ENCODE measurements at regions of chr20 and their contacts with region 1.

Region 1: DNA sequence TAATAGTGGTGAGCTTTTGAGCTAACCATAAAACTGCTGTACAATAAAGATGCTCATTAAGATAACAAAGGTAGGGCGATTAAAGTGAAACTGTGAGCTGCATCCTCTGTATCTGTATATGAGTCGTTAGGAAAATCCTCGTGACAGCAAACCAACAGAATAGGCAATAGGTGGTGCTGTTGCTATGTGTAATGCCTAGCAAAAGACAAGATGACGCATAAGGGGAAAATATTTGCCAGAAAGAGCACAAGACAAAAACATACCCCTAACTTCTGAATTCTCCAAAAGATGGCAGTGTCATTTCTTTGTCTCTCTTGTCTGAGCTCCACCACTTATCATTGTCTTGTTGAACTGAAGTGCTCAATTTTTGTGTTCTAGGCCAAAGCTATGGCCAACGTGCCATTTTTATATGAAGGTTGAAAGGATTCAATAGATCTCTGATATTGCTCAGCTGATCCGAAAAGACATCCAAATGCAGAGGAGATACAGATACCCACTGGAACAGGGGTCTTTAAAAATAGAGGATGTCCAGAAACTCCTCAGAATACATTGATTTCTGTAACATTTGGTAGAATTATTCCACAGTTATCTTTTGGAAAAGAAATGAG is 56.3 kb upstream of the ANKEF1 start:
- DNase-seq: peak in 7 of 9 experiments; percentile 5 to 80 (median 26)
- ATAC-seq: peak; percentile 81
- H3K4me3 ChIP-seq: no peak overlapping the region
- H3K4me3 Mint-ChIP-seq: no peak overlapping the region
- H3K27ac ChIP-seq: no peak overlapping the region
- H3K27ac Mint-ChIP-seq: no peak overlapping the region
- H3K4me1 ChIP-seq: no peaks in the 10 kb centered on the region
- H3K4me1 Mint-ChIP-seq: no peaks in the 10 kb centered on the region
- H3K27me3 ChIP-seq: no peaks in the 10 kb centered on the region
- H3K27me3 Mint-ChIP-seq: no peaks in the 10 kb centered on the region
- CTCF ChIP-seq: peak; percentile 72

Region 2: GRCh38 chr20:9359561-9360308 is 618.8 kb before region 1 on chr20:
- CTCF ChIA-PET with region 1: no interaction called
- POLR2A ChIA-PET with region 1: no interaction called
- intact Hi-C with region 1: no loop called
- DNase-seq: no peak
- ATAC-seq: no peak
- H3K4me3 ChIP-seq: no peak overlapping the region
- H3K4me3 Mint-ChIP-seq: no peak overlapping the region
- H3K27ac ChIP-seq: no peak overlapping the region
- H3K27ac Mint-ChIP-seq: no peak overlapping the region
- H3K4me1 ChIP-seq: no peaks in the 10 kb centered on the region
- H3K4me1 Mint-ChIP-seq: no peaks in the 10 kb centered on the region
- H3K27me3 ChIP-seq: no peaks in the 10 kb centered on the region
- H3K27me3 Mint-ChIP-seq: no peaks in the 10 kb centered on the region
- CTCF ChIP-seq: no peak

Region 3: GRCh38 chr20:10090588-10091166 is 112.2 kb after region 1 on chr20:
- CTCF ChIA-PET with region 1: interaction called, 127 read pairs
- POLR2A ChIA-PET with region 1: interaction called, 4 read pairs
- intact Hi-C with region 1: loop called (anchors 1 to 2 kb)
- DNase-seq: peak in 5 of 9 experiments; percentile 5 to 56 (median 24)
- ATAC-seq: peak; percentile 58
- H3K4me3 ChIP-seq: no peak overlapping the region
- H3K4me3 Mint-ChIP-seq: no peak overlapping the region
- H3K27ac ChIP-seq: no peak overlapping the region
- H3K27ac Mint-ChIP-seq: no peak overlapping the region
- H3K4me1 ChIP-seq: no peaks in the 10 kb centered on the region
- H3K4me1 Mint-ChIP-seq: no peaks in the 10 kb centered on the region
- H3K27me3 ChIP-seq: no peaks in the 10 kb centered on the region
- H3K27me3 Mint-ChIP-seq: peaks cover 6% of the 10 kb centered on the region
- CTCF ChIP-seq: peak; percentile 52

Region 4: GRCh38 chr20:10201321-10201870 is 222.9 kb after region 1 on chr20:
- CTCF ChIA-PET with region 1: no interaction called
- POLR2A ChIA-PET with region 1: no interaction called
- intact Hi-C with region 1: no loop called
- DNase-seq: no peak
- ATAC-seq: no peak
- H3K4me3 ChIP-seq: no peak overlapping the region
- H3K4me3 Mint-ChIP-seq: no peak overlapping the region
- H3K27ac ChIP-seq: no peak overlapping the region
- H3K27ac Mint-ChIP-seq: no peak overlapping the region
- H3K4me1 ChIP-seq: no peaks in the 10 kb centered on the region
- H3K4me1 Mint-ChIP-seq: no peaks in the 10 kb centered on the region
- H3K27me3 ChIP-seq: no peaks in the 10 kb centered on the region
- H3K27me3 Mint-ChIP-seq: no peaks in the 10 kb centered on the region
- CTCF ChIP-seq: no peak

Region 5: GRCh38 chr20:10357974-10358373 is 379.5 kb after region 1 on chr20:
- CTCF ChIA-PET with region 1: no interaction called
- POLR2A ChIA-PET with region 1: no interaction called
- intact Hi-C with region 1: loop called in 1 of 2 experiments (anchors 1 kb)
- DNase-seq: peak in 2 of 9 experiments; percentile 12 to 28
- ATAC-seq: no peak
- H3K4me3 ChIP-seq: no peak overlapping the region
- H3K4me3 Mint-ChIP-seq: no peak overlapping the region
- H3K27ac ChIP-seq: no peak overlapping the region
- H3K27ac Mint-ChIP-seq: no peak overlapping the region
- H3K4me1 ChIP-seq: no peaks in the 10 kb centered on the region
- H3K4me1 Mint-ChIP-seq: no peaks in the 10 kb centered on the region
- H3K27me3 ChIP-seq: no peaks in the 10 kb centered on the region
- H3K27me3 Mint-ChIP-seq: no peaks in the 10 kb centered on the region
- CTCF ChIP-seq: no peak

Region 6: DNA sequence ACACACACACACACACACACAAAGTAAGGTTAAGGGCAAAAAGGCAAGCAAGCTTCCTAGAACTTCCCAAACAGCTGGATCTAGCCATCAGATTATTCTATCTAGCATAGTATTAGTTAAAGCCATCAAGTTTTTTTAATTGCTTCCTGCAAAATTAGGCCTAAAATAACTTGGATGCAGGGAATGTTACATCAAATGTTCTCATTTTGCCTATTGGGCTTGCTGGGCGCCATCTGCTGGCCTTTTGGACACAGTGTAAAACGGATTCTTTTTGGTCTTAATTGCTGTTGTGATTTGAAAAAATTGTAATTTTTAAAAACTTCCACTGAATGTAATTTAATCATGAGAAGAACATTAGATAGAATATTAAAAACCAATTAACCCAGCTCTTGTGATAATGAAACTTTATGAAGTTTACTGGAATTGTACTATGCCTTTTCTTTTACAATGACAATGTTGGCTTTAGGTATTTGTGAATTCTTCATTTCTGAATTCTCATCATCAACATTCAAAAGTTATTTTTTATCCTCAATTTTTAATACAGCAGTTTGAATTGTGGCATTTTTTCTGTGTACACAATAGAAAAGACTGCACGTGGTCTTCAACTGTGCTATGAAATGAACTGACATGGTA is 448.7 kb after region 1 on chr20:
- CTCF ChIA-PET with region 1: interaction called, 23 read pairs
- POLR2A ChIA-PET with region 1: no interaction called
- intact Hi-C with region 1: loop called (anchors 1 kb)
- DNase-seq: peak in 7 of 9 experiments; percentile 20 to 65 (median 51)
- ATAC-seq: no peak
- H3K4me3 ChIP-seq: no peak overlapping the region
- H3K4me3 Mint-ChIP-seq: no peak overlapping the region
- H3K27ac ChIP-seq: no peak overlapping the region
- H3K27ac Mint-ChIP-seq: no peak overlapping the region
- H3K4me1 ChIP-seq: peaks cover 7% of the 10 kb centered on the region
- H3K4me1 Mint-ChIP-seq: peaks cover 54% of the 10 kb centered on the region
- H3K27me3 ChIP-seq: no peaks in the 10 kb centered on the region
- H3K27me3 Mint-ChIP-seq: no peaks in the 10 kb centered on the region
- CTCF ChIP-seq: peak; percentile 86

Region 7: DNA sequence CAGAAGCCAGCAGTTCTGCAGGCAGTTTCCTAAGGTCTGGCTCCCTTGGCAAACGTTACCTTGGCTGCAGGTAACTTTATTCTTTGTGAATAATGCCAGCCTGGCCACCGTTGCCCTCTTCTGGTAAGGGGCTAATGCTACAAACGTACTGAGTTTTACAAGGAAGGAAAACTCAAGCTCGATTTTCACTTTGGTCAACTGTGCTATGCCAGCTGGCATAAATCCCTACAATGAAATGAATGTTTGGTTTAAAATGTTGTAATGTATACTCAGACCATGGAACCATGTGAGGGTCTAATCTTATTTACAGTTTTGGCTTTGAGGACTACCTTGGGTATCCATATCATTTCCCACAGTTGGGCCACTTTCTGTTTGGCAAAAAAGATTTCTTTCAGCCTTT is 558.0 kb after region 1 on chr20:
- CTCF ChIA-PET with region 1: interaction called, 4 read pairs
- POLR2A ChIA-PET with region 1: no interaction called
- intact Hi-C with region 1: loop called (anchors 5 to 10 kb)
- DNase-seq: peak in 4 of 9 experiments; percentile 9 to 33 (median 30)
- ATAC-seq: no peak
- H3K4me3 ChIP-seq: no peak overlapping the region
- H3K4me3 Mint-ChIP-seq: no peak overlapping the region
- H3K27ac ChIP-seq: no peak overlapping the region
- H3K27ac Mint-ChIP-seq: no peak overlapping the region
- H3K4me1 ChIP-seq: peaks cover 15% of the 10 kb centered on the region
- H3K4me1 Mint-ChIP-seq: peaks cover 22% of the 10 kb centered on the region
- H3K27me3 ChIP-seq: no peaks in the 10 kb centered on the region
- H3K27me3 Mint-ChIP-seq: no peaks in the 10 kb centered on the region
- CTCF ChIP-seq: no peak

Region 8: GRCh38 chr20:11204926-11205768 is 1226.6 kb after region 1 on chr20:
- CTCF ChIA-PET with region 1: no interaction called
- POLR2A ChIA-PET with region 1: no interaction called
- intact Hi-C with region 1: loop called (anchors 10 kb)
- DNase-seq: peak in 3 of 9 experiments; percentile 10 to 33 (median 26)
- ATAC-seq: no peak
- H3K4me3 ChIP-seq: no peak overlapping the region
- H3K4me3 Mint-ChIP-seq: no peak overlapping the region
- H3K27ac ChIP-seq: no peak overlapping the region
- H3K27ac Mint-ChIP-seq: no peak overlapping the region
- H3K4me1 ChIP-seq: no peaks in the 10 kb centered on the region
- H3K4me1 Mint-ChIP-seq: peaks cover 4% of the 10 kb centered on the region
- H3K27me3 ChIP-seq: no peaks in the 10 kb centered on the region
- H3K27me3 Mint-ChIP-seq: no peaks in the 10 kb centered on the region
- CTCF ChIP-seq: peak; percentile 8

Region 9: DNA sequence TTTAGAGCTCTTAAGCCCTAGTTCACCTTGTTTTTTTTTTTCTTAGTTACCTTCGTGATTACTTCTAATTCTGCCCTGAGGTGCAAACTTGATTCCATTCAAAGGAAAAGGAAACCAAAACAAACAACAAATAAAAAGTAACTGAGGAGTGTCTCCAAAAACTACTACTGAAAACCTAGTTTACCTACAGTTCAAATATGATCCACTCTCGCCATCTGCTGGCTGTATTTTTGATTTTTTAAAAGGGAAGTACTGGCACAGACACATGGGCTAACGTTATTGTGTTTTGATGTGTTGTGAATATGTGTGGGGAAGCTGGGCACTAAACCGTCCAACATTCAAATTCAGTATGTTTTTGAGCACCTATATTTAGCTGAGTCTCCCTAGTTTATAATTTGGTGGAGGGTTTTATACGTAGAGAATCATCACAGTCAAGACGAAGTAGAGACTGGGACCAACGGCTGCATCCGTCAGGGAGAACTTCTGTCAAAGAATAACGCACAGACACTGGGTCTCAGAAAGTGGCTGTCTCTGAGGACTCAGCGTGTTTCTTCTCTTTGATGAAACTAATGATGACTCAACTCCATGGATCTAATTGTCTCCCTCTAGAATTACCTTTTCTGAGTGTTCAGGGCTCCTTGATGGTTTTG is 1565.7 kb after region 1 on chr20:
- CTCF ChIA-PET with region 1: interaction called, 6 read pairs
- POLR2A ChIA-PET with region 1: no interaction called
- intact Hi-C with region 1: loop called (anchors 2 to 10 kb)
- DNase-seq: peak in 2 of 9 experiments; percentile 4 to 11
- ATAC-seq: no peak
- H3K4me3 ChIP-seq: no peak overlapping the region
- H3K4me3 Mint-ChIP-seq: no peak overlapping the region
- H3K27ac ChIP-seq: no peak overlapping the region
- H3K27ac Mint-ChIP-seq: no peak overlapping the region
- H3K4me1 ChIP-seq: no peaks in the 10 kb centered on the region
- H3K4me1 Mint-ChIP-seq: no peaks in the 10 kb centered on the region
- H3K27me3 ChIP-seq: no peaks in the 10 kb centered on the region
- H3K27me3 Mint-ChIP-seq: no peaks in the 10 kb centered on the region
- CTCF ChIP-seq: peak; percentile 22